ENCODE measurements at regions of chr14 and their contacts with region 1.

Region 1: GRCh38 chr14:96409701-96410100 is 17.8 kb downstream of the AK7 start:
- DNase-seq: peak; percentile 20
- H3K4me3 ChIP-seq: no peak overlapping the region
- H3K27ac ChIP-seq: no peak overlapping the region
- H3K4me1 ChIP-seq: no peaks in the 10 kb centered on the region
- H3K27me3 ChIP-seq: no peaks in the 10 kb centered on the region
- CTCF ChIP-seq: no peak

Region 2: DNA sequence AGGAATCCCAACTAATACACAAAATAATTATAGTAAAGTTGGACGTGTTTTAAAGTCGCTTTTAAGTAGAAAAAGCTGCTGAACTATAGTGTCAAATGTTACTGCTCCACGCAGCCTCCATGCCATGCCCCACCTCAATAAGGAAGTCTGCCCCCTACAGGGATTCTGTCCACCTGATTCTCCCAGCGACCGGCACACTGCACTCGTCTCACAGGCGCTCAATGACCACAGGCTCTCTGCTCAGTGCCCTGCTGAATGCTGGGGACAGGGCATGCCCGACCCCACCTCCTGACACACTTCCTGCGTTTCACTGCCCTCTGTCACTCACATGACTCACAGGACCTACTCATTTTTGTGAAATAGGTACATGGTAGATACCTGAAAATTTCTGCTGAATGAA is 104.7 kb before region 1 on chr14:
- CTCF ChIA-PET with region 1: no interaction called
- dilution Hi-C with region 1: no loop called
- in situ Hi-C with region 1: loop called in 1 of 2 experiments (anchors 10 kb)
- intact Hi-C with region 1: no loop called
- DNase-seq: peak; percentile 16
- H3K4me3 ChIP-seq: no peak overlapping the region
- H3K27ac ChIP-seq: no peak overlapping the region
- H3K4me1 ChIP-seq: peaks cover 2% of the 10 kb centered on the region
- H3K27me3 ChIP-seq: no peaks in the 10 kb centered on the region
- CTCF ChIP-seq: peak; percentile 13 to 20

Region 3: DNA sequence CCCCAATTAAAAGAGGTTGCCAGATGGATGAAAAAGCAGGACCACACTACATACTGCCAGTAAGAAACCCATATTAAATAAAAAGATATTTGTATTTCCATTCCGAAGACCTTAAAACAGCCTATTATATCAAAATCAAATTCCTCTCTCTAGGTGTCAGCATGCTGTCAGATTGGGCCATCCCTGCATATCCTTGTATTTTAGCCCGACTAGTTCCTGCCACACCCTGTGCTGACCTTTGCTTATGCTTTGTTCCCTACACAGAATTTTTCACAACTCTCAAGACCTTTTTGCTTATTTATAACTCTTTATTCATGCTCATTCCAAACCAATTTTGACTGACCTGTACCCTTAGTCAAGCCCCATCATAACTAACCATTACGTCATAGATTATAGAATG is 33.6 kb before region 1 on chr14:
- CTCF ChIA-PET with region 1: no interaction called
- dilution Hi-C with region 1: no loop called
- in situ Hi-C with region 1: no loop called
- intact Hi-C with region 1: no loop called
- DNase-seq: no peak
- H3K4me3 ChIP-seq: no peak overlapping the region
- H3K27ac ChIP-seq: no peak overlapping the region
- H3K4me1 ChIP-seq: no peaks in the 10 kb centered on the region
- H3K27me3 ChIP-seq: no peaks in the 10 kb centered on the region
- CTCF ChIP-seq: no peak